HEK293T (cell line): ENCODE measurements at regions of chr22 and their contacts with region 1.

Region 1: DNA sequence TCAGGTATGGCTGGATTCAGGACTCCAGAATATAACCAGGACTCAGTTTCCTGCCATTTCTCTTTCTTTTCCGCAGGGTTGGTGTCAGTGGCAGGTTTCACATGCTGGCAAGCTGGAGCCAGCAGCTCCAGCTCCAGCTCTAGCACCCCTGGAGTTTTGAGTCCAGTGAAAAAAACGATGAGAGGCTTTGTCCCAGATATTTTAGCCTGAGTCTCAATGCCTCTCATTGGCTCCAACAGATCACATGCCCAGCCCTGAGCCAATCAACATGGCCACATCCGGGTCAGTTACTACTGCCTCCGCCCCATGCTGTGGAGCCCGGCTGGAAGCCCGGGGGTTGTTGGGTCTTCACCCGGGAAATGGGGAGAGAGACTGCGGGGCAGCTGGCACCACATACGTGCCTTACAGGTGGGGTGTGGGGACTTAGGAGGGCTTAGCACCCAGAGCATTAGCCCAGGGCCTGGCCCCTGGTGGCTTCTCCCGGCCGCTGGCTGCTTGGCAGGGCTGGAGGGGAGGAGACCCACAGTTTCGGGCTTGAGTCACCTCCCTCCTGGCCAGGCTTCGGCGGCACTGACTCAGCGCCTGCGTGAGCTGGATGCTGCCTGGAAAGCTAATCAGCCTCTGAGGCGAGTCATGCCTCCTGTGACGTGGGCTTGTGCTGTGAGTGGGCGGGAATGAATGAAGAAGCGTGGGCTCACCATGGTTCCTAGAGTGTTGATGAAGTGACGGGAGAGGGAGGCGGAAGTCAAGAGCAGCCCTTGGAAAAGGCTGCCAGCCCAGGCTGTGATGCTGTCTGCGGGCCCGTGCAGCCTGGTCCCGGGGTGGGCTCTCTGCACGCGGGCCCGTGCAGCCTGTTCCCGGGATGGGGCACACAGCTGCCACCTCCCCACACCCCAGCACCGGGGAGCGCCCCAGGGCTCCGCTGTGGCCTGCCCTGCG is 15.3 kb upstream of the MRTFA start:
- DNase-seq: peak; percentile 93

Region 2: GRCh38 chr22:40346178-40347118 is 305.4 kb before region 1 on chr22 and contains the start of gene ADSL:
- CTCF ChIA-PET with region 1: no interaction called
- POLR2A ChIA-PET with region 1: interaction called, 11 read pairs
- DNase-seq: peak; percentile 93

Region 3: DNA sequence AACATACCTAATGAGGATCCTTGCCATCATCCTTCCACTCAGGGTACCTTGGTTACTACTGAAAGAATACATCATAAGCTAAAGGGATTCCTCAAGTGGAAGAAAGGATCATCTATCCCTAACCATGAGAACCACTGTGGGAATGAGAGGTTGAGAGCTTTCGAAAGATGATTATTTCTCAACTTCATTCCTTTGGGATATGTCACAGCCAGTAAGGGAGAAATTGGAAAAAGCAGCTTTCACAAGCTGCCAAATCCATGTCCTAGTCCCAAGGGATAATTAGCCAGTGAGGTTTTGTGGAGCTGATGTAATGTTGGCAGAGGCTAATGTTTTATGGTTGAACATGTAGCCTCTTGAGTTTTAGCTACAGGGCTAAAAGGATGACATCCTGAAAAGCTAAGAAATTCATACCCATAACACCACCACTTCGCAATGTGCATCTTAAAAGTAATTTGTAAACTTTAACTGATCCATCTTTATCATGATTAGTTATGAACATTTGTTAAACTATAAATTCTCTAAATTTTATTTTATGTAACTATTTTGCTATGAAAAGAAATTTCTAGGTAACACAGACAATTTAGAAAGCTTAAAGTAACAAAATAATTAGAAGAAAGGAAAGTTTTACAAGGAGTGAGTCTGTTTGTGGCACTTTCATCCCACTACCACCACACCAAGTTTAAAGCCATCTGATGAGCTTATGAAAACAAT is 139.3 kb before region 1 on chr22:
- CTCF ChIA-PET with region 1: interaction called, 3 read pairs
- POLR2A ChIA-PET with region 1: interaction called, 11 read pairs
- DNase-seq: no peak

Region 4: GRCh38 chr22:40585310-40585751 is 66.5 kb before region 1 on chr22:
- CTCF ChIA-PET with region 1: no interaction called
- POLR2A ChIA-PET with region 1: no interaction called
- DNase-seq: no peak

Region 5: GRCh38 chr22:40636380-40637182 is 15.3 kb before region 1 on chr22 and contains the start of gene MRTFA:
- CTCF ChIA-PET with region 1: no interaction called
- POLR2A ChIA-PET with region 1: interaction called, 22 read pairs
- DNase-seq: peak; percentile 99

Region 6: DNA sequence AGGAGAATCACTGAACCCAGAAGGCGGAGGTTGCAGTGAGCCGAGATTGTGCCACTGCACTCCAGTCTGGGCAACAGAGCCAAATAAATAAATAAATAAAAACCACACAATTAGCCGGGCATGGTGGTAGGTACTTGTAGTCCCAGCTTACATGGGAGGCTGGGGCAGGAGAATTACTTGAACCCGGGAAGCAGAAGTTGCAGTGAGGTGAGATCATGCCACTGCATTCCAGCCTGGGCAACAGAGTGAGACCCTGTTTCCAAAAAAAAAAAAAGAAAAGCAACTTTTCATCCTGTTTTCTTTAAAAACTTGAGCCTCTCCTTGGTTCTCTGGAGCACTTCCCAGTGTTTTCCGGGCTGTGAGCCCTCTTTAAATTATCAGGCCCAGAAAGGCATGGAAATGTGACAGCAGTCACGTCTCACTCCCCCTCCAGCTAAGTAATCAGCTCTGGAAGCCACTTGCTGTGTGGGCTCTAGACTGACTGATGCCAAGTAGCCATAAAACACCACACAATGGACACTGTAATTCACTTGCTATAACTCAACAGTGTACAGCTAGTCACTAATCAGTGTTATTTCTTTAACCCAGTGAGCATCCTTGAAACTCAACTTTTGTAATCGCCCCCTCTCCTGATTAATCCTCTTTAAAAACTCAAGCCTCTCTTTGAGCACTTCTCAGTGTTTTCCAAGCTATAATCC is 14.5 kb after region 1 on chr22:
- CTCF ChIA-PET with region 1: no interaction called
- POLR2A ChIA-PET with region 1: interaction called, 11 read pairs
- DNase-seq: no peak